ENCODE measurements at regions of chr1 and their contacts with region 1.

Region 1: GRCh38 chr1:212608209-212608955 is at the start of gene ATF3:
- DNase-seq: peak; percentile 95
- CTCF ChIP-seq: no peak

Region 2: DNA sequence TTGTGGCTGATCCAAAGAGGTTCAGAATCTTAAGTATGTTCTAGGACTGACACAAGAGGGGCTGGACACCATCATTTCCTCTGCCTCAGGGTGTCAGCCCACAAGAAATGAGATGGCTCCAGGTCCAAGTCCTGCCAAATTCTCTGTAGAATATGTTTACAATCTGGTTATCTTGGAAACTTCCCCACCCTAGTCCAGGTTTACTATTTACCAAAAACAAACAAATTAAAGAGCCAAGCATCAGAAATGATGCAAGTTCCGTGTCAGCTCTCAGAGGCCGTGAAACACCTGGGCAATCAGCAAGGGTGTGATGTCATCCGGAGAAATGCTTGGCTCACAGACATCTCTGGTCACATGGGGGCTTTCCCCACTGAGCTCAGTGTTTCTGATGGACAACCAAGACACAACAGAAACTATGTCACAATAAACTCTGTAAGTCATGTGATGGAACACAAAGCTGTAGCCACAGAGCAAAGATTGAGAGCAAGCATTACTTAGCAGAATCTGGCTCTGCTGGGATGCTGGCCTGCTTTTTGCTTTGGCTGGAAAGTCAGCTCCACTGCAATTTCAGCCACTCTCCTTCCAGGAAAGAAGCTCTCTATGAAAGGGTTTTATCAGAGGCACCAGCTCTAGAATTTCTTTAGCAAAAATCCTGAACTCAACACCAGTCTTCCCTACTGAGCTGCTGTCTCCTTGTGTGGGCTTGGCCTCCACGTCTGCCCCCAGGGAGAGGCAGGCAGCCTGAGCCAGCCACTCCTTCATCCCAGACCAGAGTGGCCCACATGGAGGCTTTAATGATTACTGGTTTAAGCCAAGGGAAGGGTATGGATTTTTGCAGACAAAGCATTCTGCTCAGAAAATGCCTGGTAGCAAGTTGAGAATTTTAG is 119.7 kb before region 1 on chr1:
- CTCF ChIA-PET with region 1: no interaction called
- POLR2A ChIA-PET with region 1: interaction called, 12 read pairs
- DNase-seq: peak; percentile 79
- CTCF ChIP-seq: no peak

Region 3: DNA sequence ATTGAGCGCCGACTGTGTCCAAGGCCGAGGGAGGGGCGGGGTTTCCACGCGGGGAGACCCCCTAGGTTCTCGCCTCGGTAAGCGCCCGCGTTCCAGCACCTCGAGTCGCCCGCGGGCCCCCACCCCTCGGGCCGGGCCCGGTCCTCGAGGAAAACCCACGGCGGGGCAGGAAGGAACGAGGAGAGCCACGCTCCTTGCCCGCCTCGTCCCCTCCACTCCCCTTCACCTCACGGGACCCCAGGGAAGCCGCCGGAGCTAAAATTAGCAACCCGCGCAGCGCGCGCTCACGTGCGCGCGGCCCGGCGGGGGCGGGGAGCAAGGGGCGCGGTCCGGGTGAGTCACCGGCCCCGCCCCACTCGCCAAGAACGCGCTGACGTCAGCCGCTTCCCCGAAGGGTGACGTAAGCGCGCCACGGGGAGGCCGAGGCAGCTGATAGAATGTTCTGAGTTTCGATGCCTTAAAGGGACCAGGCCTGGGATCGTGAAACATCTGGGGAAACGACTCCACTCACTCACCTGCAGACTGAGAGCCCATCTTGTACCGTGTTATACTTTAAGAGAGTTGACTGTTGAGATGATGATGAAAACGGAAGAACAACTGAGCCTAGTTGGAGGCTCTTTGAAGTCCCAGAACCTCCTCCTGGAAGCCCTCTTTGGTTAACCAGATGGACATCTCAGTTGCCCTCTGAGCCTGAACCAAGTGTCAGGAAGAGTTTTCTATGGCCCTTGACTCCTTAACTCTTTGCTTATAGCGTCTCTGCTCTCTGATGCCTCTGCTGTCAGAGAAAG is 49.5 kb before region 1 on chr1:
- CTCF ChIA-PET with region 1: no interaction called
- POLR2A ChIA-PET with region 1: interaction called, 15 read pairs
- DNase-seq: peak; percentile 96
- CTCF ChIP-seq: no peak

Region 4: DNA sequence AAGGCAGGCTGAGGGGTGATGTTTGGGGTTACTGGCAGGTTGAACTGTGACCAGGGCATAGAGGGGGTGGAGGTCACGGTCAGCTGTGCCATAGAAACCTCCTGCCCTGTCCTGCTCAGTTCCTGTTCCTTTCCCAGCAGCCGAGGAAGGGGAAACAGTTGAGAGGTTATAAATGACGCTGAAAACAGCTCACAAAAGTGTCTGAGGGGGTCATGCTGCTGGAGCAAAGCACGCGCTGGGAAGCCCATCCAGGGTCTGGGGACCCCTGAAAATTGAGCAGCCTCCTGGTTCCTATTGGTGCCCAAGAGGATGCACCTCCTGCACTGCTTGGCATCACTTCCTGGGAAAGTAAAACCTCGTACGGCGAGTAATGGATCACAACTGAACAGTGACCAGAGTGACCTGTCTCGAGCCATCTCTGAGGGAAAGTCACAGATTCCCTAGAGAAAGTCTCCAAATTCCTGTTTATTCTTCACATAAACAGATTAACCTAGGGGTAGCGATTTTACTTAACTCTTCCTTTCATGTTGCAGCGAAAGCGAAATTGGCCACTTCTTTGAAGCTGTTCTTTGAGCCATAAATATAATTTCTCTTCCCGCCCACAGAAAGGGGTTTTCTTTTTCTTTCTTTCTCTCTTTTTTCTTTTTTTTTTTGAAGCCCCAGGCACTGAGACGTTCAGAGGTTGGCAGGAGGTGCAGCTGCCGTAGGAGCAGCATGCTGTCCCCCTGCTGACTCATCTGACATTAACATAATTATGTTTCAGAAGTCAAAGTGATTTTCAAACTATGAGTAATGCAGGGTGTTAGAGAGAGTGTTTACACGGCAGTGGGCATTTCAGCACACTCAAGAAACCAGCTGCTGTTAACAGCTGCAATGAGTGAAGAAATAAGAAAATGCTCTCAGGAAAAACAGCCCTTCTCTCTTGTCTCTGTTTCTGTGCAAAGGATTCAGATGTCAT is 41.6 kb before region 1 on chr1:
- CTCF ChIA-PET with region 1: no interaction called
- POLR2A ChIA-PET with region 1: interaction called, 24 read pairs
- DNase-seq: peak; percentile 88
- CTCF ChIP-seq: no peak

Region 5: DNA sequence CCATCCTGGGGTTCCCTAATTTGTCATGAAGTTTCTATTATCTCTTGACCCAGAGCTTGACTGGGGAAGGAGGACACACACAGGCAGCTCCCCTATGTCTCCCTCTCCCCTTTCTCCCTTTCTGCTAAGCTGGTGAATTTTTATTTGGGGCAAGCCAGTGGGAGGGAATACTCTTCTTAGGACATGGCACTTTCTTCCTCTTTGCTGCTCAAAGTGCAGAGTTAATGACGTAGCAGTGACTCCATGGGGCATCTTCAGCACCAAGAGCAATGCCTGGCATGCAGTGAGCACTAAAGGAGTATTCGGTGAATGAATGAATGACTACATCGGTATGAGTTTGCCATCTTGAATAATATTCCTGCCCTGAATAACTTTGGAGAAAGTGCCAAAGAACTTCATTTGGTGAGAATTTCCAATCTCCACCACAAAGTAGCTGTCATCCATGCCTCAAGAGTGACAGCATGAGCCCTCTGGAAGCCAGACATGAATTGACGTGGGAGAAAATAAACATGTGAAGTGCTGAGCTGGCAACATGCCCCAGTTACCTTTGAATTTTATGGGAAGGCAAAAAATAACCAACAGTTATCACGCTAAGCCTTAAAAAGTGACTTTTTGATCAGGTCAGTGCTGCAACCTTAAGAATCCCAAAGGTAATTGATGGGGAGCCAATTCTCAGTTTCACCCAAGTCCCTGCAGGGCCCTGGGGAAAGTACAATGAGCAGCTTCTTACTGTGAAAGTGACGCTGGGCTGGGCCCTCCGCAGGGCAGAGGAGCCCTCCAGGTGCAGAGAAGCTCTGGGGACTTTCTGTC is 22.0 kb before region 1 on chr1:
- CTCF ChIA-PET with region 1: interaction called, 4 read pairs
- POLR2A ChIA-PET with region 1: interaction called, 23 read pairs
- DNase-seq: peak; percentile 65
- CTCF ChIP-seq: no peak

Region 6: GRCh38 chr1:212595787-212596714 is 12.3 kb before region 1 on chr1:
- CTCF ChIA-PET with region 1: interaction called, 14 read pairs
- POLR2A ChIA-PET with region 1: interaction called, 34 read pairs
- DNase-seq: peak; percentile 76
- CTCF ChIP-seq: peak; percentile 50

Region 7: DNA sequence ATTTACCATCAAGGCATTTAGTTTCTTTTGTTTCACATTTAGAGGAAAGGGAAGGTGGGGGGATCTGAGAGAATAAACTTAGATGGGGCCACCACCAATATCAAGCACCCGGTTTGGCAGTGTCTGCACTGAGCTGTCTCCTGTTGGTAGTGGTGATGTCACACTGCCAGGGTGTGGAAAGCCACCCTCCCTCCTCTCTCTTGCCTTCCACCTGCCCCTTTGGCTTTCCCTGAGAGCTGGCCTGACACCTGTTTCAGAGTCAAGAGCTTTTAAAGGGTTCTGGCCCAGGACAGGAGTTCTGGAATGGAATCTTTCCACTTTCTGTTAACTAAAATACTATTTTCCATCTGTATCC is 13.5 kb after region 1 on chr1:
- CTCF ChIA-PET with region 1: interaction called, 5 read pairs
- POLR2A ChIA-PET with region 1: interaction called, 24 read pairs
- DNase-seq: no peak
- CTCF ChIP-seq: no peak

Measured in GM10248 (cell line).